ENCODE measurements at regions of chrX and their contacts with region 1.

Region 1: DNA sequence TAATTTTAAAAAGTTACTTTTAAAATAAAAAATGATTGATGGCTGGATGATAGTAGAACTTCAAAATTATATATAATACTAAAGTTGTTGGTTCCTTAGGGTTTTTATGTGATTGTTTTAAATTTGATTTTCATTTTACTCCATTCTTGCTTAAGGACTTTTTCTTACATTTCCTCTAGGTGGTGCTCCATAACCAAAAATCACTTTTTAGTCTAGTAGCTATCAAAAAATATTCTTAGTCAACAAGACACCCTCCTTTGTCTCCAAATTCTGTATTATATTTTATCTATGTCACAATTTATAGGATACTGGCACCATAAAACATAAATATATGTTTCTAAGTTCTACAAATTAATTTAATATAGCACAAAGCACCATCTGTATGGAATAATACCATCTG is 67.2 kb upstream of the BRWD3 start:
- DNase-seq: peak in 3 of 14 experiments; percentile 31 to 42 (median 38)
- ATAC-seq: no peak
- H3K4me3 ChIP-seq: no peak overlapping the region
- H3K4me3 Mint-ChIP-seq: no peak overlapping the region
- H3K27ac ChIP-seq: no peak overlapping the region
- H3K27ac Mint-ChIP-seq: no peak overlapping the region
- H3K4me1 ChIP-seq: no peaks in the 10 kb centered on the region
- H3K4me1 Mint-ChIP-seq: no peaks in the 10 kb centered on the region
- H3K27me3 ChIP-seq: no peaks in the 10 kb centered on the region
- H3K27me3 Mint-ChIP-seq: no peaks in the 10 kb centered on the region
- CTCF ChIP-seq: no peak

Region 2: DNA sequence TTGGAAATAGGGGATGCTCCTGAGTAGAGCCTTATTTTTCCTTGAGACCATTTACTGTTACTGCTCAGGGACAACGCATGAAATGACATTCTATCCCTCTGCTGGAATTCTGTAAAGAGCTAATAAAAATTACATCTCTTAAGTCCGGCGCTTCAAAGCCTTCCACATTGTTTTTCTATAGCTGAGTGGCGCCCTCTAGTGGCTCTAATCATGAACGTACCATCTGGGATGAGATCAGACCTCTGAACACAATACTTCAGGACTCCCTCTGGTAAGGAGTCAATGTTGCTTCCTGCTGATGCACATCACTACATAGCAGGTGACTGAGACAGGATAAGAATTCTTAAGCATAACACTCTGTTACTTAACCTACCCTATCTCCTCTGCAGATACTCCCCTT is 318.8 kb after region 1 on chrX:
- CTCF ChIA-PET with region 1: no interaction called
- POLR2A ChIA-PET with region 1: no interaction called
- intact Hi-C with region 1: loop called (anchors 5 to 10 kb)
- DNase-seq: peak; percentile 25 to 76 (median 41)
- ATAC-seq: peak; percentile 82
- H3K4me3 ChIP-seq: no peak overlapping the region
- H3K4me3 Mint-ChIP-seq: no peak overlapping the region
- H3K27ac ChIP-seq: no peak overlapping the region
- H3K27ac Mint-ChIP-seq: no peak overlapping the region
- H3K4me1 ChIP-seq: no peaks in the 10 kb centered on the region
- H3K4me1 Mint-ChIP-seq: peaks cover 11% of the 10 kb centered on the region
- H3K27me3 ChIP-seq: no peaks in the 10 kb centered on the region
- H3K27me3 Mint-ChIP-seq: no peaks in the 10 kb centered on the region
- CTCF ChIP-seq: peak; percentile 64

Region 3: GRCh38 chrX:81377329-81377728 is 500.5 kb after region 1 on chrX:
- CTCF ChIA-PET with region 1: interaction called, 3 read pairs
- POLR2A ChIA-PET with region 1: no interaction called
- intact Hi-C with region 1: loop called in 1 of 2 experiments (anchors 5 kb)
- DNase-seq: peak in 3 of 14 experiments; percentile 5 to 25 (median 12)
- ATAC-seq: no peak
- H3K4me3 ChIP-seq: no peak overlapping the region
- H3K4me3 Mint-ChIP-seq: no peak overlapping the region
- H3K27ac ChIP-seq: no peak overlapping the region
- H3K27ac Mint-ChIP-seq: no peak overlapping the region
- H3K4me1 ChIP-seq: no peaks in the 10 kb centered on the region
- H3K4me1 Mint-ChIP-seq: no peaks in the 10 kb centered on the region
- H3K27me3 ChIP-seq: no peaks in the 10 kb centered on the region
- H3K27me3 Mint-ChIP-seq: peaks cover 16% of the 10 kb centered on the region
- CTCF ChIP-seq: peak; percentile 45

Measured in CD4-positive, alpha-beta T cell (primary cell).